ENCODE measurements at regions of chr21 and their contacts with region 1.

Region 1: GRCh38 chr21:36504067-36505058 is 24.4 kb upstream of the CLDN14 start:
- DNase-seq: no peak
- CTCF ChIP-seq: peak; percentile 83

Region 2: GRCh38 chr21:36381841-36382589 is 122.3 kb before region 1 on chr21:
- CTCF ChIA-PET with region 1: no interaction called
- POLR2A ChIA-PET with region 1: no interaction called
- DNase-seq: no peak
- CTCF ChIP-seq: no peak

Region 3: DNA sequence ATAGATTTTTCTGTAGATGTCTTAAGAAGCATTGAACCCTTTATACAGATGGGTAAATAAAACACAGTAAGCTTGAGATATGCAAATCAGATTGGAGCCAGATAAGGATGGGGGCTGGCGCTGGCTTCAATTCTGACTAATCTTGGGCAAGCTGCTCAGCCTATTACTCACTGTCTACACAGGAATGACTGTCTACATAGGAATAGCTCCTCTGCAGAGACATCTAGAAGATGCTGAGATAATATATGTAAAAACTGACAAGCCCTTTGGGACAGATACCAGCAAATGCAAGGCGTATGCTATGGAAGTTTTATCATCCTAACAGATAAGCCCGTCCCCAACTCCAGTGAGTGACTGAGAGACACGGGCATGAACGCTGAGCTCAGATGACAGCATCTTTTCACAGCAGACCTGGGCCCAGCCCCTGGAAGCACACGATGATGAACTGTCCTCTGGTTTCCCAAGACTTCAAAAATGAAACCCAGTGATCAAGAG is 26.1 kb before region 1 on chr21:
- CTCF ChIA-PET with region 1: interaction called, 10 read pairs
- POLR2A ChIA-PET with region 1: no interaction called
- DNase-seq: no peak
- CTCF ChIP-seq: no peak

Region 4: GRCh38 chr21:36542312-36543107 is 38.1 kb after region 1 on chr21:
- CTCF ChIA-PET with region 1: interaction called, 11 read pairs
- POLR2A ChIA-PET with region 1: no interaction called
- DNase-seq: peak; percentile 81
- CTCF ChIP-seq: peak; percentile 59

Region 5: GRCh38 chr21:36584940-36585542 is 80.7 kb after region 1 on chr21:
- CTCF ChIA-PET with region 1: interaction called, 13 read pairs
- POLR2A ChIA-PET with region 1: no interaction called
- DNase-seq: no peak
- CTCF ChIP-seq: peak; percentile 17

Region 6: DNA sequence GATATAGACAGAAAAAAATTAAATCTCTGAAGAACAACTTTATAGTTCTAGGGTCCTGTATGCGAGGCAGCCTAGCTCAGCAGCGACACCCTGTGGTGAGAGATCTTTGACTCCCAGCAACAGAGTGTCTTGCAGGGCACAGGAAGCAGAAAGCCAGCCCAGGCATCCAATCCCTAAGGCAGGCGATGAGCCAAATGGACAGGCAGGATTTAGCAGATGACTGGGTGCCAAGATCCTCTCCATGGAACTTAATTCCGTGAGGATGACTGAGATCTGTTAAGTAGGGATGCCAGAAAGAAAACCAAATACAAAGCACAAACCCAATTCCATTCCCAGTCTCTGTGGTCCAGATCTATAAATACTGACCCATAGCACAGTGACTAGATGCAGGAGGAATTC is 423.4 kb after region 1 on chr21:
- CTCF ChIA-PET with region 1: interaction called, 31 read pairs
- POLR2A ChIA-PET with region 1: no interaction called
- DNase-seq: peak; percentile 78
- CTCF ChIP-seq: peak; percentile 94